Activated B cell treated with CpG ODN at 0.5 μM for 24 hours (primary cell): ENCODE measurements at regions of chr2 and their contacts with region 1.

Region 1: GRCh38 chr2:100242891-100243619 is 79.2 kb downstream of the LONRF2 start:
- DNase-seq: peak; percentile 67
- ATAC-seq: peak; percentile 41
- H3K4me3 Mint-ChIP-seq: peak overlapping the region; percentile 11
- H3K27ac Mint-ChIP-seq: peak overlapping the region; percentile 62
- H3K4me1 Mint-ChIP-seq: peaks cover 77% of the 10 kb centered on the region
- H3K27me3 Mint-ChIP-seq: peaks cover 11% of the 10 kb centered on the region
- CTCF ChIP-seq: peak; percentile 84

Region 2: GRCh38 chr2:98623657-98624056 is 1619.4 kb before region 1 on chr2:
- CTCF ChIA-PET with region 1: no interaction called
- POLR2A ChIA-PET with region 1: no interaction called
- intact Hi-C with region 1: no loop called
- DNase-seq: no peak
- ATAC-seq: no peak
- H3K4me3 Mint-ChIP-seq: no peak overlapping the region
- H3K27ac Mint-ChIP-seq: no peak overlapping the region
- H3K4me1 Mint-ChIP-seq: no peaks in the 10 kb centered on the region
- H3K27me3 Mint-ChIP-seq: no peaks in the 10 kb centered on the region
- CTCF ChIP-seq: no peak

Region 3: DNA sequence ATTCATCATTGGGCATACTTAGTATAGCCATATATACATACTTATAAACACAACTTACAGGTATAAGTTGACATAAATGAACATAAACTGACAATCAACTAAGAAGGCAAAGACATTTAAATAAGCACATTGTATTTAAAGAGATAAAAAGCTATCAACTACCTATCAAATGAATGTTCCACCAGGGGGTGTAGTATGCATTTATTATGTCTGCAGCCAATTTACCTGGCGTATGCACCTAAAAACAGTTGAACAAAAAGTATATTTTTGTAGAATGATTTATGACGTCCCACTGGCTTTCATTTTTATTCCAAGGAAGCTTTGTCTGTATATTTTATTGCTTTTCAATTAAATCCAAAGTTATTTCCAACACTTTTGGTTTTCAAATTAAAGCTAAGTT is 424.2 kb before region 1 on chr2:
- CTCF ChIA-PET with region 1: interaction called, 4 read pairs
- POLR2A ChIA-PET with region 1: no interaction called
- intact Hi-C with region 1: loop called (anchors 5 kb)
- DNase-seq: no peak
- ATAC-seq: no peak
- H3K4me3 Mint-ChIP-seq: no peak overlapping the region
- H3K27ac Mint-ChIP-seq: no peak overlapping the region
- H3K4me1 Mint-ChIP-seq: no peaks in the 10 kb centered on the region
- H3K27me3 Mint-ChIP-seq: no peaks in the 10 kb centered on the region
- CTCF ChIP-seq: no peak

Region 4: DNA sequence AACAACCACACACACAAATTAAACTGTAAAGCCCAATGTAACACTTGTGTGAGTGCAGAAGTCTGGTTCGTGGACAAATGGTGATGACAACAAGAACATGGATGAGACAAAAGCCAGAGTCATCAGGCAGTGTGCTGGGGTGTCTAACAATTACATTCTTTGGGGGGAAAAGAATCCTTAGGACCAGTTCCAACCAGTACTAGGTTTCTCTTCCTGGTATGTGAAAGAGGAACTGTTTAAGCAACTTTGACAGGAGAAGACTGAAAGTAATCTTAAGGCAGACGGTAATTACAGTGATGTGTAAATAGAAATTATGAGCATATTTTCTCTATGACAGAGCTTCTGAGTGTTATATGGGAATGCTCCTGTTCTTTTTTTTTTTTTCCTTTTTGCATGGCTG is 234.1 kb before region 1 on chr2:
- CTCF ChIA-PET with region 1: interaction called, 4 read pairs
- POLR2A ChIA-PET with region 1: no interaction called
- intact Hi-C with region 1: loop called (anchors 2 kb)
- DNase-seq: no peak
- ATAC-seq: no peak
- H3K4me3 Mint-ChIP-seq: no peak overlapping the region
- H3K27ac Mint-ChIP-seq: peak overlapping the region; percentile 50
- H3K4me1 Mint-ChIP-seq: peaks cover 24% of the 10 kb centered on the region
- H3K27me3 Mint-ChIP-seq: no peaks in the 10 kb centered on the region
- CTCF ChIP-seq: no peak

Region 5: DNA sequence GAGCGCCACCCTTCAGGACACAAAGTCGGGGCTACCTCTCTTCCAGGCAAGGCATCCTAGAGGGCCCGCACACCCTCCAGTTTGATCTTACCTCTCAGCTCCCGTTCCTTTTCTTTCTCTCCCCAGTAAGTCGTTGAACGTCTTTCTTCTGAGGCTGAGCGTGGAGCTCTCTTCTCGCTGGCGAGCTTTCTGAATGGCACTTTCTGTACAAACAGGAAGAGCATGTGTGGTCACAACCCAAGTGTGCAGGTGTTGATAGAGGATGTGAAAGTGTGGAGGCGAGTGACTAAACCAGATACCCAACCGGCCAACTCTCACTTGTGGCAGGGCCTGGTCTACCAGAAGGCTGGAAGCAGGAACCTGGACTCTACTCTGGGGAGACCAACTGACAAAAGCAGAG is 100.7 kb before region 1 on chr2 and contains the start of gene AFF3:
- CTCF ChIA-PET with region 1: interaction called, 19 read pairs
- POLR2A ChIA-PET with region 1: interaction called, 135 read pairs
- intact Hi-C with region 1: loop called (anchors 1 kb)
- DNase-seq: peak; percentile 65
- ATAC-seq: peak; percentile 86
- H3K4me3 Mint-ChIP-seq: peak within 1 kb of the TSS; percentile 99
- H3K27ac Mint-ChIP-seq: peak within 1 kb of the TSS; percentile 99
- H3K4me1 Mint-ChIP-seq: peaks cover 47% of the 10 kb centered on the region
- H3K27me3 Mint-ChIP-seq: no peaks in the 10 kb centered on the region
- CTCF ChIP-seq: no peak
- total RNA-seq, gene AFF3: 228 and 271 TPM in 2 replicates

Region 6: GRCh38 chr2:100580367-100581276 is 337.6 kb after region 1 on chr2:
- CTCF ChIA-PET with region 1: no interaction called
- POLR2A ChIA-PET with region 1: no interaction called
- intact Hi-C with region 1: loop called (anchors 5 kb)
- DNase-seq: peak; percentile 50
- ATAC-seq: peak; percentile 79
- H3K4me3 Mint-ChIP-seq: peak overlapping the region; percentile 56
- H3K27ac Mint-ChIP-seq: peak overlapping the region; percentile 99
- H3K4me1 Mint-ChIP-seq: peaks cover 22% of the 10 kb centered on the region
- H3K27me3 Mint-ChIP-seq: no peaks in the 10 kb centered on the region
- CTCF ChIP-seq: no peak